Right ventricle myocardium superior (tissue), 1 donor: ENCODE measurements at regions of chr2 and their contacts with region 1.

Region 1: GRCh38 chr2:156400706-156401678 is 35.2 kb upstream of the GPD2 start:
- DNase-seq: peak; percentile 69
- ATAC-seq: peak; percentile 93

Region 2: DNA sequence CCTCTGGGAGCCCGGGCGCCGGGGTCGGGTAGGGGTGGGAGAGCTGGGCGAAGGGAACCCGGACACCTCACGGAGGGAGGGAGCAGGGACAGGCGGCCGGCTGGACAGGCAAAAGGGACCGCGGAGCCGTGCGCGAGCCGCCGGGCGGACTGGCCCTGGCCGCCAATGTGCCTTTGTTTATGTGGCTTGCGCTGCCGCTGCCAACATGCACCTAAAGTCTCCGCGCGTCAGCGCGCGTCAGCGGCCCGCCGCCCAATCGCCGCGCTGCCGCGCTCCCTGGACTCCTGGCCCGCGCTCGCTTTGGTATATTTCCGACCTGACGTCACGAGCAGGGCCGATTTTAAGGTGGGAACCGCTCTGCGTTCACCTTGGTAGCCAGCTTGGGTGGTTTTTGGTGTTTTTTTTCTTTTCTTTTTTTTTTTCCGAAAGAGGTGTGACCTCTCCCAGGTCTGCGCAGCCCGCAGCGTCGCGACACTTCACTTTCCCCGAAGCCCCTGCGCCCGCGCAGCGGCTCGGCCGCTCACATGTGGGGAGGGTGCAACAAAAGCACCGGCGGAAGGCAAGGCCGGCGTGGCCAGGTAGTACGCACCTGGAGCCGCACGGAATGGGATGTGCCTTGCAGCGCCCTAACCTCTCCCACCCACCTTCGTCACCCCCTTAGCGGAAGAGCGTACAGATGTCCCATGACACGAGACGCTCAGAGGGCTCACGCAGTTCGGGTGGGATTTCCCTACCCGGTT is 68.3 kb before region 1 on chr2 and contains the start of gene NR4A2:
- intact Hi-C with region 1: loop called (anchors 5 kb)
- DNase-seq: peak; percentile 93
- ATAC-seq: peak; percentile 83
- total RNA-seq, gene NR4A2: 1.5 TPM

Region 3: GRCh38 chr2:156435715-156436496 is 34.9 kb after region 1 on chr2 and contains the start of gene GPD2:
- intact Hi-C with region 1: loop called (anchors 5 kb)
- DNase-seq: peak; percentile 96
- ATAC-seq: peak; percentile 99
- total RNA-seq, gene GPD2: 15.8 TPM